Ascending aorta (tissue), 2 donors: ENCODE measurements at regions of chr20 and their contacts with region 1.

Region 1: GRCh38 chr20:10558635-10559187 is 115.1 kb downstream of the JAG1 start:
- DNase-seq: peak in 1 of 2 donors; percentile 76
- H3K4me3 ChIP-seq: peak overlapping the region in 1 of 2 donors; percentile 25
- H3K27ac ChIP-seq: peak overlapping the region; percentile 68 to 69
- H3K4me1 ChIP-seq: peaks cover 3 to 36% of the 10 kb centered on the region in 2 donors
- H3K27me3 ChIP-seq: no peaks in the 10 kb centered on the region
- CTCF ChIP-seq: peak in 1 of 3 experiments; percentile 32

Region 2: DNA sequence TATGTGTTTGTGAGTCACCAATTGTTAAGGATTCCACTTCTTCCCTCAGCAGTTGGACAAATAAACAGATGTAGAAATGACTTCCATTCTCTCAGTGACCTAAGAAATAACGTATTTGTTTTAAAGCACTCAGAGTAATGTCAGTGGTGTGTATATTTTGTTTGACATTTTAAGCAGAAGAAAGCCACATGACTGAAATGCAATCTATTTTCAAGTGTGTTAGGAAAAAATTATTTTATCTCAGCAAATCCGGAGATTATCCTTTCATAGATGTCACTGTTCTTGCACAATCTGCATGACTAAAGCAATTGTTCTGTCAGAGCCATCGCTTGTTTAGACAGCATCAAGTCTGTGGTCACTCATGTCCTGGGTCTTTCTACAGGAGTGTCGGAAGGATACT is 38.0 kb after region 1 on chr20:
- intact Hi-C with region 1: loop called (anchors 1 kb)
- DNase-seq: no peak
- H3K4me3 ChIP-seq: no peak overlapping the region
- H3K27ac ChIP-seq: no peak overlapping the region
- H3K4me1 ChIP-seq: peaks cover 0 to 32% of the 10 kb centered on the region in 2 donors
- H3K27me3 ChIP-seq: no peaks in the 10 kb centered on the region
- CTCF ChIP-seq: no peak

Region 3: DNA sequence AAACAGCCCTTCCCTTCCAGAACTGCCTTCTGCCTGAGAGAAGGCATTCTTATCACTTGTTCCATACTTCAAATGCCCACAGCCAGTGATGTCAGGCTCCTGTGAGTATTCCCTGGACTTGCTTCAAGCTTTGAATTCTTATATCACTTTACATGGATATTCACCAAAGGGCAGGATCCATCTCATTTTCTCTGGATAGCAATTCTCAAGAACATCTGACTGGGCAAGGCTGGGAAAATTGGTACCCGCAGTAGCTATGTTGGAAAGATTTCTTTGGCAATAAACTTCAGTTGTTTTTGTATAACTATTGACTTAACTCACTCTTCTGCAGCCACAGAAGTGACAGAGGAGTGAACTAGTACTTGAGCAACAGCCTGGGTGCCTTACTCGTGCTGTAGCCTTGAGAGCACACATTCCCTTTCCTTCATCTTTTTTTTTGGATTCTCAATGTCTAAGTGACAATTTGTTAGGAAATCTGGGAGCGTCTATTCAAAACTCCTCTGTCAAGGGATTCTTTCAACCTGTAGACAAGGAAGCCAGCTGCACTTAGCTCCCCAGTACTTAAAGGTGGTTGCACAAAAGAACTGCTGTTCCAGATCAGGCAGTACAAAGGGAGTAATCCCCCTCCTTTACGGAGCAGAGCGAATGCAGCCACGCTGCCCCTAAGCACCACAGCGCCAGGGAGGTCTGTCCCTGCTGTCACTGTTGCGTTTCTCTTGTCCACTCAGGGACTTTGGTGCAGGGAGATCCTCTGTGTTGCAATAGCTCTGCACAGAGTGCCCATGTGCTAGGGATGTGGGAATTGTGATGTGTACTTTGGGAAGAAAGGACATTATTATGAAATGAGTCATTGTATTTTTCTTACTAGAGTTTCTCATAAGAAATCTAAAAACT is 45.5 kb after region 1 on chr20:
- intact Hi-C with region 1: loop called (anchors 2 kb)
- DNase-seq: peak; percentile 39 to 91
- H3K4me3 ChIP-seq: peak overlapping the region in 1 of 2 donors; percentile 45
- H3K27ac ChIP-seq: peak overlapping the region; percentile 87 to 96
- H3K4me1 ChIP-seq: peaks cover 12 to 42% of the 10 kb centered on the region in 2 donors
- H3K27me3 ChIP-seq: no peaks in the 10 kb centered on the region
- CTCF ChIP-seq: no peak

Region 4: GRCh38 chr20:10636326-10636818 is 77.7 kb after region 1 on chr20:
- intact Hi-C with region 1: loop called (anchors 1 kb)
- DNase-seq: peak in 1 of 2 donors; percentile 68
- H3K4me3 ChIP-seq: peak overlapping the region in 1 of 2 donors; percentile 53
- H3K27ac ChIP-seq: peak overlapping the region; percentile 93 to 100
- H3K4me1 ChIP-seq: peaks cover 29 to 57% of the 10 kb centered on the region in 2 donors
- H3K27me3 ChIP-seq: no peaks in the 10 kb centered on the region
- CTCF ChIP-seq: no peak

Region 5: GRCh38 chr20:10654630-10655029 is 95.9 kb after region 1 on chr20:
- intact Hi-C with region 1: no loop called
- DNase-seq: no peak
- H3K4me3 ChIP-seq: peak overlapping the region in 1 of 2 donors; percentile 54
- H3K27ac ChIP-seq: peak overlapping the region; percentile 93 to 100
- H3K4me1 ChIP-seq: peaks cover 28 to 96% of the 10 kb centered on the region in 2 donors
- H3K27me3 ChIP-seq: no peaks in the 10 kb centered on the region
- CTCF ChIP-seq: no peak